ENCODE measurements at regions of chr5 and their contacts with region 1.

Region 1: GRCh38 chr5:145825751-145826180 is 9.4 kb downstream of the PRELID2 start:
- DNase-seq: no peak

Region 2: DNA sequence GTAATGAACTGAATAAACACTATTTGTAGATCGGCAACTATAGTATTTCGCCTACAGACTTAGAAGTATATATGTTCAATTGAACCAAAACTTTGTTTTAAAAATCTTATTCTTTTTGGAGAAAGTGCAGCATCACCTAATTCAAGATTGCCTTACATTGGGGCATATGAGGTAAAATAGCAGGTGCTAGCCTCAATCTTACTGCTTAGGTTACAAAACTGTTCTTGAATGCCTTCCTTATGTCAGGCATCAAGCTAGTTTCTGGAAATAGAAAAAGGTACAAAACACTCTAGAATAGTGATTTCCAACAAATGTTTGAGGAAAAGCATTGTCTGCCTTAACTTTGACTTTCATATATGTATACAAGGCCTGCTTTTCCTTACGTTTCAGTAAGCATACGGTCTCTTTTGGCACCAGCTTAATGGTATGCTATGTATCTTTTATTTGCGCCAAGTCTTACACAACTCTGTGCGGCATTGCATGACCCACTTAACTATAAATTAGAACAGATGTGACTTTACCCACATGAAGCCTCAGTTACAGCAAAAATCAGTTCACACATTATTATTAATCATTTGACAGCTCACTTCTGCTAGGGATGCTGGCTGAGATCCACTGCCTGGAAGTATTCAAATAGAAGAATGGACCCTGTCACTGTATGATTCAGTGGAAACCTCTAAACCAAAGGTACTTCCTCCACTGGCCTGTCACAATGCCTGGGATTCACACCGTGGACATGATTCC is 164.7 kb before region 1 on chr5:
- intact Hi-C with region 1: no loop called
- DNase-seq: no peak

Region 3: GRCh38 chr5:146103594-146103993 is 277.8 kb after region 1 on chr5:
- intact Hi-C with region 1: no loop called
- DNase-seq: no peak

Region 4: DNA sequence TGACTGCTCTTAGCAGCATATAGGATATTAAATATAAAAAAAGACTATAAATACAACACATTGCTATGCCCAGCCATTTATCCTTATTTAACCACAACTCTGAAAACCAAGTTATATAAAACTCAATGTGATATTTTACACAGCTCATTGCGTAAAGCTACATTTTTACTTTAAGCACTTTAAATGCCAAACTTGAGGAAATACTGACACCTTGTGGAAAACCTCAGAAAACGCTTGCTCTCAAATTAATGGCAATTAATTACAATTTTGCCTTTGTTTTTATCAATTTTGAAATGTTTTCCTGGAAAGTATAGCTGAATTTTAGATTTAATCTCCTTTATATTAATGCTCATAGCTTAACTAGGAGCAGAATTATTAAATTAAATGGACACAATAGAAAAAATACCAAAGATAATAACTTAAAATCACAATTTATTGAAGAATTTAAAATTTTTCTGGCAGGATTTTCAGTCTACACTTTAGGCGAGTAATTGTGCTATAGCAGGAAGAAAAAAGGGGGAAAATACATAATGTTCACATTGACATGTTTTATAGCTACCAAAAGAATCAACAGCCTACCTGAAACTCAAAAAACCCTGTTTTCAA is 304.8 kb after region 1 on chr5:
- intact Hi-C with region 1: loop called (anchors 10 kb)
- DNase-seq: no peak

Measured in posterior cingulate gyrus (tissue), 11 donors.